SK-N-SH (cell line): ENCODE measurements at regions of chr17 and their contacts with region 1.

Region 1: DNA sequence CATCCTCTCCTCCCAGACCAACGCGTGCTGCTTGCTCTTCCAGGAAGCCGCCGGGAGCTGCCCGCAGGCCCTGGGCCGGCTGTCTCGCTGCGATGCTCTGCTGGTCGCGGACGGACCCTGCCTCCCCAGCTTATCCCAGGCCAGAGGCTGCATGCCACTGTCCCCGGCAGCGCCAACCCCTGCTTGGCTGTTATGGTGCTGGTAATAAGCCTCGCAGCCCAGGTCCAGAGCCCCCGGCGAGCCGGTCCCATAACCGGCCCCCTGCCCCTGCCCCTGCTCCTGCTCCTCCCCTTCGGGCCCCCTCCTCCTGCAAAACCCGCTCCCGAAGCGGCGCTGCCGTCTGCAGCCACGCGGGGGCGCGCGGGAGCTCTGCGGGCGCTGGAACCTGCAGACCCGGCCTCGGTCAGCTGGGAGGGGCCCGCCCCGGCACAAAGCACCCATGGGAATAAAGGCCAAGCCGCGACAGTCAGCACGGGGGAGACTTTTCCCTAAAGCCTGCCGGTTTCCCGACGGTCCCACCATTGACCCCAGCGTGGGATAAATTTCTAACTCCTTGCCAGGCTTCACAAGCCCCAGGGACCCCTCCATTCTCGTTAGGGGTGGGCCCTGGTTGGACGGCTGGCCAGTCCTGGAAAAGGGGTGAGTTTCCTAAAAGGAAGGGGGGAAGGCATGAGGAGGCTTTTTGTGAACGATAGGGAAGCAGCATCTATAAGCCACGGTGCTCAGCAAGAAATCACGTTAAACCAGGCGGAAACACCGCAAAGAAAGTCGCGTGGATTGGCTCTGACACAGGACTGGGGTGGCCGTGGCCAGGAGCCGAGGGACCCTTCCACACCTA is 11.2 kb downstream of the ENPP7 start:
- DNase-seq: peak; percentile 99
- H3K4me3 ChIP-seq: peak overlapping the region; percentile 50 to 55; a peak in 3 of 4 replicates
- H3K27ac ChIP-seq: peak overlapping the region in 1 of 2 experiments; percentile 29; a peak in 1 of 4 replicates
- H3K4me1 ChIP-seq: peaks cover 0 to 12% of the 10 kb centered on the region in 2 experiments; a peak in 1 of 4 replicates
- H3K27me3 ChIP-seq: peaks cover 42% of the 10 kb centered on the region
- CTCF ChIP-seq: peak; percentile 99
- EP300 ChIP-seq: no peak
- RAD21 ChIP-seq: peak; percentile 75

Region 2: DNA sequence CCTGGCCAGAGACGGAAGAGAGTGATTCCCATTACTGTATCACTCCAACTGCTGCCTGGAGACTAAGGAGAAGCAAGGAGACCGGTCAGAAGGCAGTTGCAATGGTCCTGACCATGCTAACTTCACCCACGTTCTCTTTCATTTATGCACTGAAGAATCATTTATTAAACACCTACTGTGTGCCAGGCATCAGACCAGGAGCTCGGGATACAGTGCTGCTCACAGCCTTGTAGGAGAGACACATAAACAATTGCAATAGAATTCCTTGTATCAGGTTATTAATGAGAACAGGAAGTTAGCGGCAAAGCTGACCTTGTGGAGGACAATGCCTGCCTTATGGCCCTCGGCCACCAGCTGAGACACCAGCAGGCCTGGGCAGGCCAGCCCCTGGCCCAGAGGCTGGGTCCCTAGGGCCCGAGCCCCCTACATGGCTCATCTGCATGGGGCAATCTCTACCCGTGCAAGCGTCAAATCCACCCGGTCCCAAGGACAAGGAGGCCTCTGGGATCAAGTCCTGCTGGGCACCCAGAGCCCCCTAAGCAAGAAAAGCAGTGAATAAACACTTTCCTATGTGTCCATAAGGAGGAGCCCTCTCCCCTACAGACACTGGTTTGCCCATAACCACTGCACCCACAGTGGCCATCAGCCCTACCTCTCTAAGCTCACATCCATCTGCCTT is 19.8 kb before region 1 on chr17:
- CTCF ChIA-PET with region 1: interaction called, 34 read pairs
- POLR2A ChIA-PET with region 1: no interaction called
- DNase-seq: peak; percentile 79
- H3K4me3 ChIP-seq: no peak overlapping the region
- H3K27ac ChIP-seq: no peak overlapping the region
- H3K4me1 ChIP-seq: peaks cover 0 to 3% of the 10 kb centered on the region in 2 experiments; a peak in 1 of 4 replicates
- H3K27me3 ChIP-seq: 0 out of 2 replicates have a peak, but pooled peaks cover 9% of the 10 kb centered on the region
- CTCF ChIP-seq: peak; percentile 49
- EP300 ChIP-seq: no peak
- RAD21 ChIP-seq: peak; percentile 79

Region 3: GRCh38 chr17:79765708-79766107 is 23.7 kb after region 1 on chr17:
- CTCF ChIA-PET with region 1: interaction called, 23 read pairs
- POLR2A ChIA-PET with region 1: no interaction called
- DNase-seq: no peak
- H3K4me3 ChIP-seq: no peak overlapping the region
- H3K27ac ChIP-seq: no peak overlapping the region
- H3K4me1 ChIP-seq: no peaks in the 10 kb centered on the region; a peak in 1 of 4 replicates
- H3K27me3 ChIP-seq: peaks cover 10% of the 10 kb centered on the region; the same call in 1 of the 2 replicates
- CTCF ChIP-seq: no peak
- EP300 ChIP-seq: no peak
- RAD21 ChIP-seq: no peak

Region 4: DNA sequence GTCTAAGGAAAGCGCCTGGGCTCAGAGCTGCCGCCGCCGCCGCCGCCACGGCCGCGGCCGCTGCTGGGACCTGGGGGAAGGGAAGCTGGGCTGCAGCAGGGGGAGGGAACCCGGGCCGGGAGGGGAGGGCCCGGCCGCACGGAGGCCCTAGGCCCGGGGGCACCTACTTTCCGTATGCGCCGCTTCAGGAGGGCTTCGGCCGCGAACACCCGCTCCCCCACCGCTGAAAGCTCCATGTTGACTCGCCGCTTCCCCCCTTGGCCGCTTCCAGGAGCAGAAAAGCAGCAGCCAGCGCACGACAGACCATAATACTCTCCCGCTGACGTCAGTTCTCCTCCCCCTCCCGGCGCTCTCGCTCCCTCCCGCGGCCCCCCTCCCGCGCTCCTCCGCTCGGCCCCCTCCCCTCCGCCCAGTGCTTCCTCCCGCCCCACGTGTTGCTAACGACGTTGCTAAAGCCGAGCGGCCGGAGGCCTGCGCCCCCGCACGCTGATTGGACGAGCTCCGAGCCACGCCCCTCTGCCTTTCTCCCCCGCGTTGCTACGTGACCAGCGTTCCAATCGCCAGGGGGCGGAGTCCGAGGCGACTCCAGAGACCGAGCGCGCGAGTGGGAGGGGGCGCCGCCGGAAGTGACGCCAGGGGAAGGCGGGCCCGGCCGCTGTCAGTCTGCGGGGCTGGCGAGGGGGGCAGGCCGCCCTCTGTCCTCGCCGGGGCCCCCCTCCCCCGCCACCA is 55.0 kb after region 1 on chr17 and contains the start of gene CBX8:
- CTCF ChIA-PET with region 1: interaction called, 29 read pairs
- POLR2A ChIA-PET with region 1: interaction called, 3 read pairs
- DNase-seq: peak; percentile 100
- H3K4me3 ChIP-seq: peak within 1 kb of the TSS; percentile 79 to 85
- H3K27ac ChIP-seq: peak within 1 kb of the TSS; percentile 82 to 98; a peak in 3 of 4 replicates
- H3K4me1 ChIP-seq: peaks cover 23 to 43% of the 10 kb centered on the region in 2 experiments; a peak in 3 of 4 replicates
- H3K27me3 ChIP-seq: 0 out of 2 replicates have a peak, but pooled peaks cover 3% of the 10 kb centered on the region
- CTCF ChIP-seq: no peak
- EP300 ChIP-seq: peak; percentile 36 to 63; a peak in 2 of 4 replicates
- RAD21 ChIP-seq: no peak; the same call in 1 of the 2 replicates
- polyA plus RNA-seq, gene CBX8: 2.1 and 2.9 TPM in 2 replicates

Region 5: GRCh38 chr17:79892459-79892858 is 150.5 kb after region 1 on chr17:
- CTCF ChIA-PET with region 1: interaction called, 10 read pairs
- POLR2A ChIA-PET with region 1: no interaction called
- DNase-seq: no peak
- H3K4me3 ChIP-seq: no peak overlapping the region
- H3K27ac ChIP-seq: no peak overlapping the region
- H3K4me1 ChIP-seq: peaks cover 0 to 21% of the 10 kb centered on the region in 2 experiments; a peak in 1 of 4 replicates
- H3K27me3 ChIP-seq: peaks cover 22% of the 10 kb centered on the region; the same call in 1 of the 2 replicates
- CTCF ChIP-seq: no peak
- EP300 ChIP-seq: no peak
- RAD21 ChIP-seq: no peak

Region 6: GRCh38 chr17:80008383-80008840 is 266.4 kb after region 1 on chr17:
- CTCF ChIA-PET with region 1: interaction called, 32 read pairs
- POLR2A ChIA-PET with region 1: no interaction called
- DNase-seq: peak; percentile 98
- H3K4me3 ChIP-seq: no peak overlapping the region; a peak in 1 of 4 replicates
- H3K27ac ChIP-seq: no peak overlapping the region
- H3K4me1 ChIP-seq: peaks cover 0 to 5% of the 10 kb centered on the region in 2 experiments; a peak in 1 of 4 replicates
- H3K27me3 ChIP-seq: no peaks in the 10 kb centered on the region
- CTCF ChIP-seq: peak; percentile 98
- EP300 ChIP-seq: no peak
- RAD21 ChIP-seq: peak; percentile 66